ENCODE measurements at regions of chr11 and their contacts with region 1.

Region 1: GRCh38 chr11:809287-810039 is at the start of gene RPLP2:
- DNase-seq: peak; percentile 98
- H3K4me3 Mint-ChIP-seq: peak within 1 kb of the TSS; percentile 92
- H3K27ac Mint-ChIP-seq: peak within 1 kb of the TSS; percentile 98
- H3K4me1 Mint-ChIP-seq: peaks cover 46% of the 10 kb centered on the region
- H3K27me3 Mint-ChIP-seq: no peaks in the 10 kb centered on the region
- total RNA-seq, gene RPLP2: 2,077 to 2,079 TPM

Region 2: DNA sequence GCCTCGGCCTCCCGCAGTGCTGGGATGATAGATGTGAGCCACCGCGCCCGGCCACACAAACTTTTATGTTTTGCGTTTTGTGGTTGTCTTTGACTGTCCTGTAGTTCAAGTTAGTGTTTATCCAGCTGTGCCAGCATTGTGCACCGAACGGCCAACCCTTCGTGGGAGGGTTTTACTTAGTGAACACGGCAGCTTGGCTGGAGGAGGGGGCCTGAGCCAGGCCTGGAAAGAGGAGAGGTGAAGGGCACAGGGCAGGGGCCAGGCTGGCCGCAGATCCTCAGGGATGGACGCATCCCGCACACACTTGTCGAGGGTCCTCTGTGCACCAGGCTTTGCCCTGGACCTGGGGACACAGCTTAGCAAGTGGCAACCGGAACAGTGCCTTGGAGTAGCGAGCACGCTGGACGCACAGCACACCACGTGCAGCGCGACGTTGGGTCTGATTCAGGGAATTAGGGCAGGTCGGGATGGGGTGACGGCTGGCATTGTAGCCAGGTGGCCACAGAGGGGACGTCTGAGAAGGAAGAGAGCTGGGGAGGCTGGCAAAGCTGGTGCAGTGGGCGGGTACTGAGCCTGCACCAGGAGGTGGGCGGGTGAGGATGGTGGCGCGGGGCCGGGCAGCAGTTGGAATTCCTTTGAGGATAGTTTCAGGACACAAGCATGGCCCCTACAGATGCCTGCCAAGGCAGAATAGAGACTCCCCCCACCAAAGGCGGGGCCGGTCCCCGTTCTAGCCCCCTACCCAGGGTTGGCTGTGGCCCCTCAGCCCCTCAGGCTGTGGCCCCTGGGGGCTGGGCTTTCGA is 90.0 kb before region 1 on chr11:
- CTCF ChIA-PET with region 1: no interaction called
- POLR2A ChIA-PET with region 1: no interaction called
- DNase-seq: no peak
- H3K4me3 Mint-ChIP-seq: peak overlapping the region; percentile 30
- H3K27ac Mint-ChIP-seq: no peak overlapping the region
- H3K4me1 Mint-ChIP-seq: peaks cover 17% of the 10 kb centered on the region
- H3K27me3 Mint-ChIP-seq: peaks cover 35% of the 10 kb centered on the region

Region 3: GRCh38 chr11:777288-778255 is 31.9 kb before region 1 on chr11 and contains the start of gene GATD1:
- CTCF ChIA-PET with region 1: interaction called, 4 read pairs
- POLR2A ChIA-PET with region 1: interaction called, 12 read pairs
- DNase-seq: peak; percentile 94
- H3K4me3 Mint-ChIP-seq: peak within 1 kb of the TSS; percentile 81
- H3K27ac Mint-ChIP-seq: peak within 1 kb of the TSS; percentile 79
- H3K4me1 Mint-ChIP-seq: peaks cover 35% of the 10 kb centered on the region
- H3K27me3 Mint-ChIP-seq: no peaks in the 10 kb centered on the region
- total RNA-seq, gene GATD1: 48.6 to 52.9 TPM

Region 4: GRCh38 chr11:798093-798713 is 11.3 kb before region 1 on chr11 and contains the start of gene SLC25A22:
- CTCF ChIA-PET with region 1: interaction called, 3 read pairs
- POLR2A ChIA-PET with region 1: interaction called, 23 read pairs
- DNase-seq: peak; percentile 87
- H3K4me3 Mint-ChIP-seq: peak within 1 kb of the TSS; percentile 93
- H3K27ac Mint-ChIP-seq: peak within 1 kb of the TSS; percentile 89
- H3K4me1 Mint-ChIP-seq: peaks cover 37% of the 10 kb centered on the region
- H3K27me3 Mint-ChIP-seq: no peaks in the 10 kb centered on the region
- total RNA-seq, gene SLC25A22: 35.7 to 38.3 TPM

Region 5: DNA sequence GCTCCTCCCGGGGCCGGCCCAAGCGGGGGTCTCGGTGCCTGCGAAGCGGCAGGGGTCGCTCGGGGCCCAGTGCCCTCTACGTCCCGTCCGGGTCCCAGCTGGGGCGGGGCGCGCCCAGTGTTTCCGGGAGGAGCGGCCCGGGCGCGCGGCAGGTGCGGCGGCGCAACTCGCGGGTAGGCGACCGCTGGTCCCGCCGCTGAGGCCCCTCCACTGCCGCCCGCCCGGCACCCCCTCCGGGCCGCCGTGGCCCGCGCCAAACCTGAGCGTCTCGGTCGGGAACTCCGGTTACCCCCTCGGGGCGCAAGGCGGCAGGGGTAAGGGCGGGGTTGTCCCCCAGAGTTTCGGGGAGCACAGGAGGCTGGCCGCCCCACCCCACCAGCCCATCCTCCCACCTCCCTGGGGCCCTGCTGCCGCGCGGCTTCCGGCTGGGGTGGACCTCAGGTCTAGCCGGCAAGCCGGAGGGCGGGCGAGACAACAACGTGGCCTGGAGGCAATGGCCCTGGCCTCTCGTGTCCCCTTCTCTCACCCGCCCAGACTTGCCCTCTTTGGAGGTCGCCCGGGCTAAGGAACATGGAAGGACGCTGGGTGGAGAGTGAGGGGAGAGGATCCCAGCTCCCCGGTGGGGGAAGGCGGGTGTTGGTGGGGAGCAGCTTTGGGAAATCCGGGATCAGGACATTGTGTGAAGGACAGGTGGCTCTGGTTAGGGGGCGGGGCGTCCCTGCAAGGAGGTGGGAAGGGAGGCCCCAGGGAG is 17.9 kb after region 1 on chr11:
- CTCF ChIA-PET with region 1: interaction called, 3 read pairs
- POLR2A ChIA-PET with region 1: interaction called, 12 read pairs
- DNase-seq: peak; percentile 55
- H3K4me3 Mint-ChIP-seq: peak overlapping the region; percentile 75
- H3K27ac Mint-ChIP-seq: peak overlapping the region; percentile 31
- H3K4me1 Mint-ChIP-seq: peaks cover 36% of the 10 kb centered on the region
- H3K27me3 Mint-ChIP-seq: peaks cover 38% of the 10 kb centered on the region

Region 6: DNA sequence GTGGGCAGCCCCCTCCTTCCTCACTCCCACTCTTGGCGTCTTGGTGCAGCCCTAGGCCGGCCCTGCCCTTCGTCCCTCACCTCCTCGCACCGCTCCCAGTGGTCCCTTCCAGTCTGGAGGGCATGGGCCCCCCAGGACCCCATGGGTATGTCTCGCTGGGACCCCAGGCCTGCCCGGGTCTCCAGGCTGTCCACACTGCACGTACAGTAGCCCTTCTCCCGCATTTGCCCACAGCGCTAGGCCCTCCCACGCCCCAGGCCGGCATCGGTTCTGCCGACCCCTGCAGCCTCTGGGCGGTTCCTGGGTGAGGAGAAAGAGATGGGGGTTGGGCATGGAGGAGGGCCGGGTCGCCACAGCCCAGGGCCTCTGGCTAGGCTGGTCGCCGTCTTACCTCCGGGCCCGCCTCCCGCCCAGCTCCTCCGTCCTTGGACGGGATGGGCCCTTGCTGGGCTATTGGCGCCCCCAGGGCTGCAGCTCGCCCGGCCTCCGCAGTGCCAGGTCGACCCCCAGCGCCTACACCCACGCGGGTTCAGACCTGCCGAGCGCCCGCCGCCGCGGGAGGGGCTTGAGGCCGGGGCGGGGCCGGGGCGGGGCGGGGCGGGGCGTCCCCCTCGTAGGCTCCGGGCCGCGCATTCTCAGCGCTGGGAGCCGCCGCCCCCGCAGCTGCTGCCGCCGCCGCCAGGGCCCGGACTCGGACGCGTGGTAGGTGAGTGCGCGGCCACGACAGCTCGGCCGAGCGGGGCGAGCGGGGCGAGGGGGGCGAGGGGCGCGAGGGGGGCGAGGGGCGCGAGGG is 23.1 kb after region 1 on chr11 and contains the start of gene CD151:
- CTCF ChIA-PET with region 1: interaction called, 3 read pairs
- POLR2A ChIA-PET with region 1: interaction called, 12 read pairs
- DNase-seq: peak; percentile 61
- H3K4me3 Mint-ChIP-seq: peak within 1 kb of the TSS; percentile 47
- H3K27ac Mint-ChIP-seq: no peak within 1 kb of the TSS
- H3K4me1 Mint-ChIP-seq: peaks cover 36% of the 10 kb centered on the region
- H3K27me3 Mint-ChIP-seq: peaks cover 37% of the 10 kb centered on the region
- total RNA-seq, gene CD151: 28.0 to 28.6 TPM

Region 7: GRCh38 chr11:842370-843002 is 33.0 kb after region 1 on chr11 and contains the starts of genes POLR2L and TSPAN4:
- CTCF ChIA-PET with region 1: interaction called, 3 read pairs
- POLR2A ChIA-PET with region 1: interaction called, 24 read pairs
- DNase-seq: peak; percentile 88
- H3K4me3 Mint-ChIP-seq: peak within 1 kb of the TSS; percentile 83
- H3K27ac Mint-ChIP-seq: peak within 1 kb of the TSS; percentile 76
- H3K4me1 Mint-ChIP-seq: peaks cover 24% of the 10 kb centered on the region
- H3K27me3 Mint-ChIP-seq: no peaks in the 10 kb centered on the region
- total RNA-seq, gene POLR2L: 59.3 to 61.5 TPM
- total RNA-seq, gene TSPAN4: 4.4 to 4.5 TPM